Upper lobe of right lung (tissue), 1 donor: ENCODE measurements at regions of chr4 and their contacts with region 1.

Region 1: DNA sequence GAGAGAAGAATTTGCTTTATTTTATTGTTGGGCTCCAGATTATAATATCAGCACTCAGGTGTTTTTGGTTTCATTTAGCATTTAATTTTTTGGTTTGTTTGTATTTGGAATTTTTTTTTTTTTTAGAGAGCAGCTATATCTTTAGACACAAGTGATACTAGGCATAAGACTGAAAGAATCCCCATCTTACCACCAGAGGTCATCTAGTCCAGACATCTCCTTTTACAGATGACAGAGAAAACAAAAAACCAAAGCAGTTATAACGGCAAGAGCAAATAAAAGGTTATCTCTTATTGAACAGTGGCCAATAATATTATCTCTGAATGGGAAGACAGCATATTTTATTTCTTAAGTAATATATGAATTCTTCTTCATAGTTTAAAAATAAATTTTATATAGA is 22.8 kb downstream of the USP38 start:
- DNase-seq: no peak
- ATAC-seq: no peak
- H3K4me3 ChIP-seq: no peak overlapping the region
- H3K27ac ChIP-seq: no peak overlapping the region
- H3K4me1 ChIP-seq: no peaks in the 10 kb centered on the region
- H3K27me3 ChIP-seq: no peaks in the 10 kb centered on the region
- CTCF ChIP-seq: peak; percentile 40

Region 2: GRCh38 chr4:143482840-143483239 is 275.3 kb after region 1 on chr4:
- intact Hi-C with region 1: loop called (anchors 10 kb)
- DNase-seq: no peak
- ATAC-seq: peak; percentile 63
- H3K4me3 ChIP-seq: no peak overlapping the region
- H3K27ac ChIP-seq: no peak overlapping the region
- H3K4me1 ChIP-seq: peaks cover 6% of the 10 kb centered on the region
- H3K27me3 ChIP-seq: no peaks in the 10 kb centered on the region
- CTCF ChIP-seq: peak; percentile 62